Activated CD8-positive, alpha-beta T cell treated with anti-CD3 and anti-CD28 coated beads, Interleukin-2, amount 10 ng/mL, durations not matched to agents 7 days and 5 days (primary cell): ENCODE measurements at regions of chr13 and their contacts with region 1.

Region 1: DNA sequence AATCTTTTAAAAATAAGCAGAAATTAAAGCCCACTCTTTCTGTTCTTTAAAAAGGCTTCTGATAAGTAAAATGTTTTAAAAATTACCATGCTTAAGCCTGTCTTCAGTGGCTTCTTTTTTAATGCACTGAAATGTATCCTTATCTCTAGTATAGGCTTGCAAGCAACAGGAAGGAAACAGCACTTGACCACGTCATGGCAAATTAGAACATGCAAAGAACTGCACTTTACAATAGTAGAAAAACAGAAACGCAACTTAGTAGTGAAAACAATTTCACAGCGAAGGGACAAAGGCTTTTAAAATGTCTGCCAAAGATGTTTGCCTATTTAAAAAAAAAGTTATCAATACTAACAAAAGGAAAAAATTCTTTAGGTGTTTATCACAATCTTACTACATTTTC is 36.3 kb downstream of the ELF1 start:
- DNase-seq: peak; percentile 82
- ATAC-seq: peak; percentile 62
- H3K4me3 Mint-ChIP-seq: peak overlapping the region; percentile 94
- H3K27ac Mint-ChIP-seq: peak overlapping the region; percentile 93
- H3K4me1 Mint-ChIP-seq: peaks cover 53% of the 10 kb centered on the region
- H3K27me3 Mint-ChIP-seq: no peaks in the 10 kb centered on the region

Region 2: GRCh38 chr13:41004875-41005693 is 22.3 kb after region 1 on chr13:
- CTCF ChIA-PET with region 1: interaction called, 22 read pairs
- POLR2A ChIA-PET with region 1: interaction called, 11 read pairs
- DNase-seq: peak; percentile 61
- ATAC-seq: peak; percentile 85
- H3K4me3 Mint-ChIP-seq: peak overlapping the region; percentile 54
- H3K27ac Mint-ChIP-seq: peak overlapping the region; percentile 87
- H3K4me1 Mint-ChIP-seq: peaks cover 68% of the 10 kb centered on the region
- H3K27me3 Mint-ChIP-seq: no peaks in the 10 kb centered on the region

Region 3: DNA sequence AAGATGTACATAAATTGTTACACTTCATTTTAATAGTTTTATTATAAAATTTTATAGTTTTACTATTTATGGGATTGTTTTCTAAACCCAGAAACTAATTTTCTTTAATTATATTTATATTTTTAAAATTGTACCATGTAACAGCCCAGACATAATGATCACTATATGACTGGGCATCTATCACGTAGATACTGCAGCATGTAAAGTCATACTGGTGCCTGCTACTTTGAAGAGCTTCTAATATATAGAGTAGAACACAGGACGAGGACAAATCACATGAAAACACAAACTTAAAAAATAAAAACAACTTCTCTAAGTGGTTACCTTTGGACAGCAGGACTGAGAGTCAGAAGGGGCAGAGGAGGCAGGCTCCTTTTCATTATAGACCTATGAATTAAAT is 31.1 kb after region 1 on chr13:
- CTCF ChIA-PET with region 1: interaction called, 10 read pairs
- POLR2A ChIA-PET with region 1: interaction called, 40 read pairs
- DNase-seq: no peak
- ATAC-seq: no peak
- H3K4me3 Mint-ChIP-seq: peak overlapping the region; percentile 89
- H3K27ac Mint-ChIP-seq: peak overlapping the region; percentile 78
- H3K4me1 Mint-ChIP-seq: peaks cover 53% of the 10 kb centered on the region
- H3K27me3 Mint-ChIP-seq: no peaks in the 10 kb centered on the region

Region 4: DNA sequence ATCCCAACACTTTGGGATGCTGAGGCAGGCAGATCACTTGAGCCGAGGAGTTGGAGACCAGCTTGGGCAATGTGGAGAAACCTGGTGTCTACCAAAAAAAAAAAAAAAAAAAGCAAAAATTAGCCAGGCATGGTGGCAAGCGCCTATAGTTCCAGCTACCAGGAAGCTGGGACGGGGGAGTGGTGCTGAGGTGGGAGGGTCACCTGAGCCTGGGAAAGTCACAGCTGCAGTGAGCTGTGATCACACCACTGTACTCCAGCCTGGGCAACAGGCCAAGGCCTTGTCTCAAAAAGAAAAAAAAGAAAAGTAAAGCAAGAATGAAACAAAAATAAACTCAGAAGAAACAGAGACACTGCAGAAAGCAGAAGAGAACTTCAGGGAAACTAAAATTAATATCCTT is 249.0 kb after region 1 on chr13:
- CTCF ChIA-PET with region 1: no interaction called
- POLR2A ChIA-PET with region 1: no interaction called
- DNase-seq: no peak
- ATAC-seq: no peak
- H3K4me3 Mint-ChIP-seq: no peak overlapping the region
- H3K27ac Mint-ChIP-seq: no peak overlapping the region
- H3K4me1 Mint-ChIP-seq: no peaks in the 10 kb centered on the region
- H3K27me3 Mint-ChIP-seq: no peaks in the 10 kb centered on the region